Endothelial cell of umbilical vein (primary cell): ENCODE measurements at regions of chr6 and their contacts with region 1.

Region 1: GRCh38 chr6:72411872-72412708 is 209.8 kb upstream of the KCNQ5 start:
- DNase-seq: peak; percentile 91
- H3K4me3 ChIP-seq: no peak overlapping the region
- H3K27ac ChIP-seq: no peak overlapping the region
- H3K4me1 ChIP-seq: no peaks in the 10 kb centered on the region
- H3K27me3 ChIP-seq: peaks cover 7 to 10% of the 10 kb centered on the region in 2 experiments
- CTCF ChIP-seq: peak; percentile 100
- POLR2A ChIP-seq: no peak

Region 2: GRCh38 chr6:72182337-72183246 is 229.5 kb before region 1 on chr6:
- CTCF ChIA-PET with region 1: interaction called, 10 read pairs
- POLR2A ChIA-PET with region 1: no interaction called
- dilution Hi-C with region 1: no loop called
- intact Hi-C with region 1: no loop called
- DNase-seq: peak; percentile 39
- H3K4me3 ChIP-seq: peak overlapping the region in 2 of 3 experiments; percentile 27 to 29
- H3K27ac ChIP-seq: no peak overlapping the region
- H3K4me1 ChIP-seq: peaks cover 7% of the 10 kb centered on the region
- H3K27me3 ChIP-seq: peaks cover 31 to 44% of the 10 kb centered on the region in 2 experiments
- CTCF ChIP-seq: no peak
- POLR2A ChIP-seq: no peak

Region 3: DNA sequence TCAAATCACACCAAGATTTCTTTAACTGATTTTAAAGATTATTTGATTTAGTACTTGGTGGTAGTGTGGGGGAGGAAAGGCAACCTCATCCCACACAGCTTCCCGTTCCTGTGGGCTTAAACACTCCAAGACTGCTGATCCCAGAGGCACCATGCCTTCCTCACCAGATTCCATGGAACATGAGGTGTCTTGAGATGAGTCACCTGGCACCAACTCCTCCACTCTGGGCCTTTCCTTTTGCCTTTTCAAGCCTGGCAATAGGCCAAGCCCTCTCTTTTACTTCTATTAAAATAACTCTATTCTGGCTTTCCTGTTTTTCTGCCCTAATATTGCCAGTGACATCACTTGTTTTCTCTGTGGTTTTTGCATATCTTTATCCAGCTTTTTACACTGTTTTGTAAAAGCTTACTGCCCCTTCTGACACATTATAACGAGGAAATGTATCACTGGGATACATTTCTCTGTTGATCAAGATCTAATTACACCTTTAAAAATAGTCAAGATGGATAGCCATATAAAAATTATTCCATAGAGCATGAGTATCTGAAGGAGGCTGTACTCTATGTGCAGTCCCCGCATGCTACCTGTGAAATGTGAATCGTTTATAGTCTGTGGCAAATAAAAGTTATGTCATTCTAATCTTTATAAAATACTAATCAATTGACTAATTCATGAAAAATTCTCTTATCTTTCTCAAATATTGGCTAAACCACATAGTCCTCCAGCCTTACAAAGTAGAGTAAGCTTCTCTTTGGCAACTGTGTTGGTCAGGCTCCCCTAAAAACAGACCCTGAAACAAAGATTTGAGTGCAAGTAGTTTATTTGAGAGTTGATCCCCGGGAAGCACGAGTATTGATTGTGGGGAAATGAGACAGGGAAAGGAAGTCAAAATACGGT is 48.0 kb before region 1 on chr6:
- CTCF ChIA-PET with region 1: interaction called, 16 read pairs
- POLR2A ChIA-PET with region 1: no interaction called
- dilution Hi-C with region 1: no loop called
- intact Hi-C with region 1: no loop called
- DNase-seq: peak; percentile 94
- H3K4me3 ChIP-seq: no peak overlapping the region
- H3K27ac ChIP-seq: peak overlapping the region; percentile 48
- H3K4me1 ChIP-seq: peaks cover 20% of the 10 kb centered on the region
- H3K27me3 ChIP-seq: no peaks in the 10 kb centered on the region
- CTCF ChIP-seq: no peak
- POLR2A ChIP-seq: peak; percentile 39

Region 4: DNA sequence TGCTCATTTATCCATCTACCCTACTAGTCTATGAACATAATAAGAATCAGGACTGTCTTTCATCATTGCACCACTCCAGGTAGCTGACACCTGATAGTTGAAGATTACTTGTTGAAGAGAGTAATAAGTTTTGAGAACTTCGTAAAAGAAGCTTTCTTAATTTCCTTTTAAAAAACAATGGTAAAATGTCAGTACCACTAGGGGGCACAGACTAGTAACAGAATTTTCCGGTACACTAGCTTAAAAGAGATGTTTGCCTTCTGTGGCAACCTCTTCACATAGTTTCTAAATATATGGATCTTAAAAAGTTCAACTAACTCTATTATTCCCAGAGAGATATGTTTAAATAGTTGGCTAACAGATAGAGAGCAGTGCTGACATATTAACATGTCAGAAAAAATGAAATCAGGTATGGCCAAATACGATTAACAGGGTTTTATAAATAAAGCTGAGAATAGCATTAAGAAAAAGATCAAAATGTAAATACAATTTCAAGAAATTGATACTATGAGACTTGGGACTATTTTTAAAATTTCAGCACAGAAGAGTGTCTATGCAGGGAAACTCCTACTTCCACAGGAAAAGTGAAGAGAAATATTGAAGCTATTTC is 204.4 kb after region 1 on chr6:
- CTCF ChIA-PET with region 1: interaction called, 44 read pairs
- POLR2A ChIA-PET with region 1: no interaction called
- dilution Hi-C with region 1: no loop called
- intact Hi-C with region 1: loop called (anchors 5 kb)
- DNase-seq: peak; percentile 39
- H3K4me3 ChIP-seq: no peak overlapping the region
- H3K27ac ChIP-seq: no peak overlapping the region
- H3K4me1 ChIP-seq: peaks cover 2% of the 10 kb centered on the region
- H3K27me3 ChIP-seq: peaks cover 24 to 38% of the 10 kb centered on the region in 2 experiments
- CTCF ChIP-seq: peak; percentile 24 to 31
- POLR2A ChIP-seq: no peak

Region 5: GRCh38 chr6:73180763-73181619 is 768.9 kb after region 1 on chr6:
- CTCF ChIA-PET with region 1: interaction called, 11 read pairs
- POLR2A ChIA-PET with region 1: no interaction called
- dilution Hi-C with region 1: no loop called
- intact Hi-C with region 1: loop called (anchors 1 kb)
- DNase-seq: peak; percentile 55
- H3K4me3 ChIP-seq: no peak overlapping the region
- H3K27ac ChIP-seq: no peak overlapping the region
- H3K4me1 ChIP-seq: no peaks in the 10 kb centered on the region
- H3K27me3 ChIP-seq: peaks cover 11 to 19% of the 10 kb centered on the region in 2 experiments
- CTCF ChIP-seq: peak; percentile 49 to 65
- POLR2A ChIP-seq: no peak